CD4-positive, alpha-beta T cell (primary cell): ENCODE measurements at regions of chr4 and their contacts with region 1.

Region 1: DNA sequence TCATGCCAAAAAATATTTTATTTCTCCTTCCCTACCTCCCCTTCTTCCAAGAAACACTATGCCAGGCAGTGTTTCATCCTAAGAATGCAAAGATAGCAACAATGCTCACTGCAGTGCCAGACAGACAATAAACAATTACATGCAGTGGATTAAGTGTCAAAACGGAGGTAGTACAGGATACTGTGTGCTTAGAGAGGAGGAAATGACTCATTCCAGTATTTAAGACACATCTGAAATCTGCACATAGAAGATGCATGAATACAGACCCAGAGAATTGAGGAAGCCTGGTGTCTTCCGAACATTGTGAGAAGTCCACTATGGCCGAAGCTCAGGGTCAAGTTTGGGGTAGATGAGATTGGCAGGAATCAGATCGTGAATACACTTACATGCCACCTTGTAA is 326.4 kb downstream of the PPP3CA start:
- DNase-seq: peak in 4 of 14 experiments; percentile 20 to 77 (median 60)
- ATAC-seq: peak; percentile 73
- H3K4me3 ChIP-seq: peak overlapping the region; percentile 11
- H3K4me3 Mint-ChIP-seq: peak overlapping the region; percentile 61
- H3K27ac ChIP-seq: peak overlapping the region; percentile 46 to 66
- H3K27ac Mint-ChIP-seq: peak overlapping the region; percentile 76
- H3K4me1 ChIP-seq: peaks cover 39% of the 10 kb centered on the region
- H3K4me1 Mint-ChIP-seq: peaks cover 35% of the 10 kb centered on the region
- H3K27me3 ChIP-seq: no peaks in the 10 kb centered on the region
- H3K27me3 Mint-ChIP-seq: no peaks in the 10 kb centered on the region
- CTCF ChIP-seq: no peak

Region 2: GRCh38 chr4:101037938-101038413 is 17.0 kb after region 1 on chr4:
- CTCF ChIA-PET with region 1: interaction called, 7 read pairs
- POLR2A ChIA-PET with region 1: interaction called, 5 read pairs
- intact Hi-C with region 1: loop called in 1 of 2 experiments (anchors 2 kb)
- DNase-seq: peak in 4 of 14 experiments; percentile 17 to 62 (median 28)
- ATAC-seq: peak; percentile 57
- H3K4me3 ChIP-seq: no peak overlapping the region
- H3K4me3 Mint-ChIP-seq: peak overlapping the region; percentile 26
- H3K27ac ChIP-seq: no peak overlapping the region
- H3K27ac Mint-ChIP-seq: peak overlapping the region; percentile 35
- H3K4me1 ChIP-seq: peaks cover 17% of the 10 kb centered on the region
- H3K4me1 Mint-ChIP-seq: peaks cover 29% of the 10 kb centered on the region
- H3K27me3 ChIP-seq: no peaks in the 10 kb centered on the region
- H3K27me3 Mint-ChIP-seq: no peaks in the 10 kb centered on the region
- CTCF ChIP-seq: no peak

Region 3: DNA sequence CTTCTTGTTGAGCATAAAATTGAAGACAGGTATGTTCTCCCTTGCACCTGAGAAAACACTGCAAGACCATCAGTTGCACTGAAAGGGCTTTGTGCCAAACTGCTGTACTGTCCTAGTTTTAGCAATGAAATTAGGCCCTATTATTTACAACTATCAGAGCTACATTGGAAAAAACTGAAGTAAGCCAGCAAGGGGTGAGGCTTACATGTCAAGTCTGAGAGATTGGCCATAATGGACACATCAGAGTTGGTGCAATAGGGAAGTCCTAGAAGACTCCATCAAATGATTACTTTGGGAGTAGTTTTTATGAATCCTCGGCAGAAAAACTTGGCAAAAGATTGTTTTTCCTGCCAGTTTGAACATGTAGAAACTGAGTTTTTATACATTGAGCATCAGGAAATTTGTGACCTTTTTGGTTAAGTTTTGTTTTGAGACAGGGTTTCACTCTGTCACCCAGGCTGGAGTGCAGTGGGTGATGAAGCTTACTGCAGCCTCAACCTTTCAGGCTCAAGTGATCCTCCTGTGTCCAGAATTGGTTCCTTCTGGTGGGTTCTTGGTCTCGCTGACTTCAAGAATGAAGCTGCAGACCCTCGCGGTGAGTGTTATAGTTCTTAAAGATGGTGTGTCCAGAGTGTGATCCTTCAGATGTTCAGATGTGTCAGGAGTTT is 609.5 kb after region 1 on chr4:
- CTCF ChIA-PET with region 1: no interaction called
- POLR2A ChIA-PET with region 1: no interaction called
- intact Hi-C with region 1: no loop called
- DNase-seq: no peak
- ATAC-seq: no peak
- H3K4me3 ChIP-seq: no peak overlapping the region
- H3K4me3 Mint-ChIP-seq: no peak overlapping the region
- H3K27ac ChIP-seq: no peak overlapping the region
- H3K27ac Mint-ChIP-seq: no peak overlapping the region
- H3K4me1 ChIP-seq: no peaks in the 10 kb centered on the region
- H3K4me1 Mint-ChIP-seq: no peaks in the 10 kb centered on the region
- H3K27me3 ChIP-seq: no peaks in the 10 kb centered on the region
- H3K27me3 Mint-ChIP-seq: peaks cover 12% of the 10 kb centered on the region
- CTCF ChIP-seq: no peak

Region 4: GRCh38 chr4:102705351-102705935 is 1684.5 kb after region 1 on chr4:
- CTCF ChIA-PET with region 1: no interaction called
- POLR2A ChIA-PET with region 1: no interaction called
- intact Hi-C with region 1: no loop called
- DNase-seq: no peak
- ATAC-seq: no peak
- H3K4me3 ChIP-seq: no peak overlapping the region
- H3K4me3 Mint-ChIP-seq: no peak overlapping the region
- H3K27ac ChIP-seq: no peak overlapping the region
- H3K27ac Mint-ChIP-seq: no peak overlapping the region
- H3K4me1 ChIP-seq: no peaks in the 10 kb centered on the region
- H3K4me1 Mint-ChIP-seq: no peaks in the 10 kb centered on the region
- H3K27me3 ChIP-seq: no peaks in the 10 kb centered on the region
- H3K27me3 Mint-ChIP-seq: no peaks in the 10 kb centered on the region
- CTCF ChIP-seq: no peak